ENCODE measurements at regions of chr11 and their contacts with region 1.

Region 1: GRCh38 chr11:26551186-26551801 is 20.8 kb downstream of the MUC15 start:
- DNase-seq: no peak
- ATAC-seq: no peak
- H3K4me3 ChIP-seq: no peak overlapping the region
- H3K27ac ChIP-seq: no peak overlapping the region
- H3K4me1 ChIP-seq: no peaks in the 10 kb centered on the region
- H3K27me3 ChIP-seq: no peaks in the 10 kb centered on the region
- CTCF ChIP-seq: no peak
- EP300 ChIP-seq: no peak
- POLR2A ChIP-seq: no peak
- RAD21 ChIP-seq: no peak

Region 2: DNA sequence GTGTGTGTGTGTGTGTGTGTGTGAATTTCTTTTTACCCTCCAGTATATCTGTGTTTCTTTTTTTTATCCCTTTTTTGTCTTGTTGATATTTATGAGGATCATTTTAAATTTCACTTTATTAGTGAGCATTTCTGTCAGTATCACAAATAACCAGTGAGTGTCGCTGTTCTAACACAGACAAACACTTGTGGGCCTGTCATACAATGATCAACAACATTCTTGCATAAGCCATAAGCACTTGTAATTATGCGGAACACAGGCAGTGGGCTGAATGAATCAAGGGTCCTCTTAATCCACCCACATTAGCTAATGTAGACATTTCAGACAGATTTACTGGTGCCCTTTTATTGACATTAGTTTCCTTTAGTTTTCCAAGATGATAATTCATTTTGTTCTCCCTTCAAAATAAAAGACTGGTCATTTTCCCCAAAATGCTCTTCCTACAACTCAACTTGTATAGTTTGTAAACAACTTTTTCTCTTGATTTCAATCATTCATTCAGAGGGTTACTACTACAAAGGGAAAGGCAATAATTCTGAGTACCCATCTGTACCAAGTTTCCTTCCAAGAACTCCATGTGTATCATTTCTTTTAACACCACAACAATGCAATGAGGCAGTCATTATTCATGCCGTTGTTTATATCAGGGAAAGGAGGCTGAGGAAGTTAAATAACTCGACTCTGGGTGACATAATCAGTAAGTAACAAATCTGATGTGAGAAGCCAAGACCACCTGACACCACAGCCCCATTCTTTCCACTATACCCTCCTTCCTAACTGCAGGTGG is 253.9 kb before region 1 on chr11:
- CTCF ChIA-PET with region 1: interaction called, 3 read pairs
- POLR2A ChIA-PET with region 1: no interaction called
- in situ Hi-C with region 1: no loop called
- intact Hi-C with region 1: loop called (anchors 1 kb)
- DNase-seq: peak; percentile 58
- ATAC-seq: peak; percentile 80
- H3K4me3 ChIP-seq: no peak overlapping the region
- H3K27ac ChIP-seq: no peak overlapping the region
- H3K4me1 ChIP-seq: no peaks in the 10 kb centered on the region
- H3K27me3 ChIP-seq: no peaks in the 10 kb centered on the region
- CTCF ChIP-seq: peak; percentile 72
- EP300 ChIP-seq: no peak
- POLR2A ChIP-seq: no peak
- RAD21 ChIP-seq: no peak

Measured in HepG2 (cell line).